Activated T-helper 1 cell treated with anti-CD3 and anti-CD28 coated beads, Interleukin-12 subunit alpha, Interleukin-12 subunit beta, Interleukin-2, Interleukin-4 antibody, amounts not matched to agents 30 ng/mL and 10 ng/mL and 1 ng/mL, durations not matched to agents 14 hours and 24 hours and 36 hours (primary cell): ENCODE measurements at regions of chr15 and their contacts with region 1.

Region 1: GRCh38 chr15:69413822-69414700 is at the start of gene KIF23:
- DNase-seq: peak; percentile 91
- H3K4me3 Mint-ChIP-seq: peak within 1 kb of the TSS; percentile 89
- H3K27ac Mint-ChIP-seq: peak within 1 kb of the TSS; percentile 73
- H3K4me1 Mint-ChIP-seq: peaks cover 42% of the 10 kb centered on the region
- H3K27me3 Mint-ChIP-seq: peaks cover 2% of the 10 kb centered on the region
- total RNA-seq, gene KIF23: 40.8 and 41.6 TPM in 2 replicates

Region 2: GRCh38 chr15:68820295-68821189 is 593.5 kb before region 1 on chr15 and contains the start of gene ANP32A:
- intact Hi-C with region 1: loop called (anchors 2 kb)
- DNase-seq: peak; percentile 94
- H3K4me3 Mint-ChIP-seq: peak within 1 kb of the TSS; percentile 98
- H3K27ac Mint-ChIP-seq: peak within 1 kb of the TSS; percentile 100
- H3K4me1 Mint-ChIP-seq: peaks cover 40% of the 10 kb centered on the region
- H3K27me3 Mint-ChIP-seq: no peaks in the 10 kb centered on the region
- total RNA-seq, gene ANP32A: 275 TPM in 2 replicates

Region 3: GRCh38 chr15:68991723-68992122 is 422.3 kb before region 1 on chr15:
- intact Hi-C with region 1: no loop called
- DNase-seq: no peak
- H3K4me3 Mint-ChIP-seq: no peak overlapping the region
- H3K27ac Mint-ChIP-seq: no peak overlapping the region
- H3K4me1 Mint-ChIP-seq: no peaks in the 10 kb centered on the region
- H3K27me3 Mint-ChIP-seq: peaks cover 6% of the 10 kb centered on the region

Region 4: GRCh38 chr15:69160141-69160993 is 253.7 kb before region 1 on chr15 and contains the start of gene GLCE:
- intact Hi-C with region 1: loop called (anchors 1 kb)
- DNase-seq: peak; percentile 92
- H3K4me3 Mint-ChIP-seq: peak within 1 kb of the TSS; percentile 96
- H3K27ac Mint-ChIP-seq: peak within 1 kb of the TSS; percentile 63
- H3K4me1 Mint-ChIP-seq: peaks cover 21% of the 10 kb centered on the region
- H3K27me3 Mint-ChIP-seq: peaks cover 36% of the 10 kb centered on the region
- total RNA-seq, gene GLCE: 2.8 and 2.9 TPM in 2 replicates

Region 5: DNA sequence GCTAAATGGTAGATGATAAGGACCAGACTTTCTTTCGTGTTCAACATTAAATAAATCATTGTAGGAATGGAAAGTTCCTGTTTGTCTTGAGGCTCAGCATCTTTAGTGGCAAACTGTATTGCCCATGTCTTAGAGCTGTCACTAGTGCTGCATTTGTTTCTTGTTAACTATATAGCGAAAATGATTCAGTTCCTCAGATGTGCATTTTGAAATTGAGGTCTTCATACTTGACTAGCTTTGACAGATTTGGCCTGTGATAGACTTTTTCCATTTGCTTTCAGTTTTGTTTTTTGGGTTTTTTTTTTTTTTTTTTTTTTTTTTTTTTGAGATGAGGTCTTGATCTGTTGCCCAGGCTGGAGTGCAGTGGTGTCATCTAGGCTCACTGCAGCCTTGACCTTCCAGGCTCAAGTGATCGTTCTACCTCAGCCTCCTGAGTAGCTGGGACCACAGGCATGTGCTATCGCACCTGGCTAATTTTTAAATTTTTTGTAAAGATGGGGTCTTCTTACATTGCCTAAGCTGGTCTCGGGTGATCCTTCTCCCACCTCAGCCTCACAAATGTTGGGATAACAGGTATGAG is 29.1 kb after region 1 on chr15:
- intact Hi-C with region 1: loop called (anchors 1 kb)
- DNase-seq: no peak
- H3K4me3 Mint-ChIP-seq: peak overlapping the region; percentile 4
- H3K27ac Mint-ChIP-seq: peak overlapping the region; percentile 76
- H3K4me1 Mint-ChIP-seq: peaks cover 20% of the 10 kb centered on the region
- H3K27me3 Mint-ChIP-seq: no peaks in the 10 kb centered on the region

Region 6: GRCh38 chr15:69462493-69463181 is 48.6 kb after region 1 on chr15:
- intact Hi-C with region 1: loop called (anchors 2 kb)
- DNase-seq: peak; percentile 88
- H3K4me3 Mint-ChIP-seq: peak overlapping the region; percentile 83
- H3K27ac Mint-ChIP-seq: peak overlapping the region; percentile 79
- H3K4me1 Mint-ChIP-seq: peaks cover 20% of the 10 kb centered on the region
- H3K27me3 Mint-ChIP-seq: peaks cover 6% of the 10 kb centered on the region